ENCODE measurements at regions of chr2 and their contacts with region 1.

Region 1: GRCh38 chr2:174697255-174697654 is 67.0 kb downstream of the CHRNA1 start:
- DNase-seq: no peak
- H3K4me3 ChIP-seq: no peak overlapping the region
- CTCF ChIP-seq: peak; percentile 87

Region 2: DNA sequence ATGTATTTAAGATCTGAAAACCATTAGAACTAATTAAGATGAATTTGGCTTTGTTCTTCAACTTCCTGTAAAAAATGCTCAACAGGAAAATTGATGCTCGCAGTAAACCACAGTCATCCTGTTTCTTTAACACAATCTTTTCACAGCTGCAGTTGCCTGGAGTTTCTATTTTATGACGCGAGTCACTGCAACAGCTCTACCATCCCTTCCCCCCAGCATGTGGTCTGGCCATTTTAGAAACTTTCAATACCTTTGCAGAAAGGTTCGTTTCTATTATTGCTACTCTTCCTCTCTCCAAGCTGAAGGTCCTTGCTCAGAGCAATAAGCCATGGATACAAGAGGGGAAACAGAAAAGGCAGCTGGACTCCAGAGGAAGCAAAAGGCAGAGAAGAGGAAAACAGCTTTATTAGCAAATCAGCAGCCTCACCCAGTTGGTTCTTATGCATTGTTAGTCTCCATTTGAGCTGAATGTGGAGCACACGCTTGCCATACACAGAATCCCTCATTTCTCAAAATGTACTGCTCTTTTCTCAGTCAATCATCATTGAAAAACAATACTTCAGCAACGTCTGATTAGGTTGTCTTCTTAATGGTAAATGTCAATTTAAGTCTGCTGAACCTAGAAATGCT is 103.6 kb before region 1 on chr2:
- CTCF ChIA-PET with region 1: interaction called, 666 read pairs
- POLR2A ChIA-PET with region 1: no interaction called
- DNase-seq: no peak
- H3K4me3 ChIP-seq: peak overlapping the region; percentile 25
- CTCF ChIP-seq: no peak

Region 3: DNA sequence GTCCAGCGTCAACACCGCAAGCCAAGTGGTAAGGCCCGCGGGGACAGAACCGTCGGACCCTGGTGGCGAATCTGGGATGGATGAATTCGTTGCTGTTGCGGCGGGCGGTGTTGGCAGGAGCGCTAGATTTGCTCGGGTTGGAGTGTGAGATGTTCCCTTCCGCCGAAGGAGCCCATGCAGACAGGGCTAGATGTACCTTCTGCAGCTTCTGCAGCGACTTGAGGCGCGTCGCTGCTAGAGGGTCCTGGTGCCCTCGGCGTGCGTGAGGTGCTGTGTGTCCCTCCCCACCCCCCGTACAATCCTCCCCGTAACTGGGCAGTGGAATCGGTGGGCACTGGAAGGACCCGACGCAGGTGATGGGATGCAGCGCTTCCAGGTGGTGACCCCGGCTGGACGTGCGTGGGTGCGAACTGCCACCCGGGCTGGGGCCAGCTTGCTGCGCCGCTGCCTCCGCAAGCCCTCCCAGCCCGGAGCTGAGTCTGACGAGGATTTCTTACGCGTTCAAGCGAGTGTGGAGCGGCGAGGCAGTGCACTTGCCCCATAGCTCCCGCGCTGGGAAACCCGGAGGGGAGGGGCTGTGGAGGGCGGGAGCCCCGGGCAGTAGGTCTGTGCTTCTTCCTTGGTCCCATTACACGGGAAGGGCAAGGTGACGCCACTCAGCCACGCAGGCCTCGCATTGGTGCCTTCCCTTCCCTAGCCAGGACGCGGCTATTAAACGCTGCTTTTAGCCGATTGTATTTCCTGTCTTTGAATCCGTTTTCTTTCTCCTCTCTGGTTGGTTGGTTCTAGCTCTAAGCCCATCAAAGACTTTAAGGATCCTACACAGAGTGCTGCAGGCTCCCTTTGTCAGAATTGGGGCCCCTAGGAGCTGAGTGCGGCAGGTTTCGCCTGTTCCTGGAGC is 32.8 kb after region 1 on chr2:
- CTCF ChIA-PET with region 1: interaction called, 14 read pairs
- POLR2A ChIA-PET with region 1: no interaction called
- DNase-seq: no peak
- H3K4me3 ChIP-seq: peak overlapping the region; percentile 40
- CTCF ChIP-seq: no peak

Region 4: DNA sequence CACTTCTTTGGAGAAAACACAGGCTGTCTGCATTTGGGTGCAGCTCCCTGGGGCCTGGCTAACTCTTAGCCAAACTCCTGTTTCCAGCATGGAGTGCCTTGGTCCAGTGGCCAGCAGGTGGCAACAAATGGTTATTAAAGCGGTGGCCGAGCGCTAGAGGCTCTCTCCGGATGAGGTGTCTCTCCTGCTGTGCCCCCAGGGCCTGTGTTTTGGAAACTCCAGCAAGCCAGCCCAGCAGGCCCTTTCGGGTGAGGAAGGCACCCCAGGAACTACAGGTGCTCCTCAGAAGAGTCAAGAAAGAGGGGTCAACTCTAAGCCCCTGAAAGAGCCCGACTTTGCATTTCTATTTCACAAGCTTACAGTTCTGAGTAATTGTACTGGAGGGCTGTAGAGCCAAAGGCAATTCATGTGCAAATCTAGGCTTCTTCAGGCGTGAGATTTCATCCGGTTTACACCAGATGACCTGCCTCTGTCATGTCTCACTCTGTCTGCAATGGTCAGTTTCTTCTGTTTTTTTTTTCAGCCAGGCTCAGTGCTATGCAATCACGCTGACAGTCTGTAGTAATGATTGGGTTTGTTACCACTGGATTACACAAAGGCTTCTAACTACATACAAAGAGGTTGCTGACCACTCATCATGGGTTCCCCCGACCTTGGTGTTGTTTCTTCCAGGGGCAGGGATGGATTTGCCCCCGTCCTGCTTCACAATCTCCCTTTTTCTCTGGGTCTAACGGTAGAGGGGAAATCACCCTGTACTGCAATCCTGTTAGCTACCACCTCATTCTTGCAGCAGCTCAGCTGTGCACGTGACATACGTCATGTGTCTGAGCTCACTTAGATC is 74.6 kb after region 1 on chr2:
- CTCF ChIA-PET with region 1: interaction called, 33 read pairs
- POLR2A ChIA-PET with region 1: no interaction called
- DNase-seq: no peak
- H3K4me3 ChIP-seq: no peak overlapping the region
- CTCF ChIP-seq: peak; percentile 86

Region 5: DNA sequence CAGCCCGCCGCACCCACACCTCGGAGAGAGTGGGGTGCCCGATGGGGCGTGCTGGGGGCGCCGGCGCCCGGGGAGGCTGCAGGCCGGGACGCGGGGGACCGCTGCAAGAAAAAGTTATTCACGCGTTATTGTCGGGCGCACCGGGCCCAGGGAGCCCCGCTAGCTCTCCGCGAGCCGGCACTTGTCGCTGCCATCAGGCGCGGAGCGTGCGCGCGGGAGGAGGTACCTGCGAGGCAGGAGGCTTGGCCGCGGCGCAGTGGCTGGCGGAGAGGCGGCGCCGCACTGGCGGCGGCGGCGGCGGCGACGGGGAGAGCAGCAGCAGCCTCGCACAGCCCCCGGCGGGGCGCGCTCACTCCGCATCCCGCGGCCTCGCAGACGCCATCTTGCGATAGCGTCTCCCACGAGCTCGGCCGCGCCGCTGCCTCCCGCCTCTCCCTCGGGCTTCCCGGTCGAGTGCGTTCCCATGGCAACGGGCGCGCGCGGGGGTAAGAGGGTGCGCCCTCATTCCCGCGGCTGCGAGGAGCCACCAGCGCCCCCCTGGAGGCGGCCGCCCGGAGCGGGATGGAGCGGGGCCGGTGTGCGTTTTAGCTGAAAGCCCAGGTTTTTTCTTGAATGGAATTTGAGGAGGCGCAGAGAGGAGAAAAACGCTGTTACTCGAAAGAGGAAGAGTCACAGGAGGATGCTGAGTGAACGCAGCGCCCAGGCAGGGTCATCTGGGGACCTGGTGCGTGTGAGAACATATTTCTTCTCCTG is 307.9 kb after region 1 on chr2 and contains the start of gene CHN1:
- CTCF ChIA-PET with region 1: interaction called, 11 read pairs
- POLR2A ChIA-PET with region 1: no interaction called
- DNase-seq: no peak
- H3K4me3 ChIP-seq: peak within 1 kb of the TSS; percentile 64
- CTCF ChIP-seq: peak; percentile 4

Region 6: DNA sequence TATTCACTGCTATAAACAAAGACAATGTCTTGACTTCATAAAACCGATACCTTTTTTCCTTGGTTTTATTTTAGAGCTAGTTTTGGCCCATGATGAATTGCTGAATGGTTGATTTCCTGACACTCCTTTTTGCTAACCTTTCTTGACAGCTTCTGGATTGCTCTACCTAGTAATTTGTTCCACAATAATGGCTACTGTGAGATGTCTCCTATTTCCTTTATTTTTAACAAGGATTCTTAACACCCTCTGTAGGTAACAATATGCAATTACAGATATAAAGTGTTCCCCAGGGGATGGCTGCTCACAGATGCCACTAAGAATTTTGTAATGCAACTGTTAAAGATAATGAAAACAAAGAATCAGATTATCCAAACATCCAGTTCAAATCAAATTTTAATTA is 585.0 kb after region 1 on chr2:
- CTCF ChIA-PET with region 1: interaction called, 20 read pairs
- POLR2A ChIA-PET with region 1: no interaction called
- DNase-seq: no peak
- H3K4me3 ChIP-seq: no peak overlapping the region
- CTCF ChIP-seq: peak; percentile 22